ENCODE measurements at regions of chr16 and their contacts with region 1.

Region 1: GRCh38 chr16:68040507-68041288 is 17.6 kb downstream of the DUS2 start:
- DNase-seq: peak; percentile 89
- H3K4me3 ChIP-seq: no peak overlapping the region
- H3K27ac ChIP-seq: peak overlapping the region in 1 of 4 donors; percentile 18
- H3K4me1 ChIP-seq: no peaks in the 10 kb centered on the region
- H3K27me3 ChIP-seq: no peaks in the 10 kb centered on the region
- CTCF ChIP-seq: peak; percentile 83 to 90 (median 90)
- EP300 ChIP-seq: no peak
- POLR2A ChIP-seq: no peak

Region 2: GRCh38 chr16:67968400-67969253 is 72.1 kb before region 1 on chr16 and contains the start of gene SLC12A4:
- in situ Hi-C with region 1: no loop called
- intact Hi-C with region 1: no loop called
- DNase-seq: peak; percentile 85
- H3K4me3 ChIP-seq: peak within 1 kb of the TSS; percentile 52 to 82 (median 76)
- H3K27ac ChIP-seq: peak within 1 kb of the TSS; percentile 90 to 95 (median 94)
- H3K4me1 ChIP-seq: peaks cover 12 to 34% (median 21%) of the 10 kb centered on the region in 4 donors
- H3K27me3 ChIP-seq: peaks cover 22% of the 10 kb centered on the region
- CTCF ChIP-seq: no peak
- EP300 ChIP-seq: no peak
- POLR2A ChIP-seq: peak; percentile 55
- total RNA-seq, gene SLC12A4: 18.1 to 46.4 (median 25.4) TPM

Region 3: DNA sequence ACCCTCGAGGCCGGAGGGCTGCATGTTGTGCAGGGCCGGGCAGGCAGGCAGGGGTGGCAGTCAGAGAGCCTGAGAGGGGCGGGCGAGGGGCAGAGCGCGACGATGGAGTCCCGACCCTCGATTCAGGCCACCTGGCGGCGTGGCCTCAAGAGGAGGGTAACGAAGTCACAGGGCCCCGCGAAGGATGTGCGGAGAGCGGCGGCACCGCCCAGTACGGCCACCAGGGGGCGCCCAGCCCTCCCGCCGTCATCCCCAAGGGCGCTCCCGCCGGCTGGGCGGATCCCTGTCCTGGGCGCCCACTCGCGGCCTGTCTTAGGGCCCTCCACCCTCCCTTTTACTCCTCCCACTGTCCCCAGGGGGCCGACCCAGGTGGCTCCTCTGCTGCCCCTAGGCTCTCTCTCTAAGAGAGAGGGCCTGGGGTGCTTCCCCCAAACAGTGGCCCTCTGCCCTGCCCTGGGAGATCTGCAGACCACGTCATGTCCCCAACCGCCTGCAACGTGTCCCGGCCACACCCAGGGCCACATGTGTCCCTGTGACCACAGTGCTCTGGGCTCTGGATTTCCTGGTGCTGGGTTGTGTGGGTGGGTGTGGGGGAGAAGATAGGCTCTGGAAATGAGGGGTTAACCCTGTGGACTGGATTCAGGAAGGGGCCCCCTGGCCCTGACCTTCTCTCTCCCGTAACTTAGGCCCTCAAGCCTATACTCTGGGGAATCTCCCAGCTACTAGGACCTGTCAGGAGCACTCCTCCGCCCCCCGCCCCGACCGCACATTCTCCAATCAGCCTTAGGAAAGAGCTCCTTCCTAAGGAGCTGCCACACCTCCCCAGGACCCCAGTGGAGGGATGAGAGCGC is 47.3 kb before region 1 on chr16:
- in situ Hi-C with region 1: loop called in 1 of 4 experiments (anchors 10 kb)
- intact Hi-C with region 1: loop called (anchors 1 kb)
- DNase-seq: peak; percentile 86
- H3K4me3 ChIP-seq: peak overlapping the region in 3 of 4 donors; percentile 17 to 43 (median 21)
- H3K27ac ChIP-seq: peak overlapping the region; percentile 55 to 71 (median 62)
- H3K4me1 ChIP-seq: peaks cover 5 to 12% (median 8%) of the 10 kb centered on the region in 4 donors
- H3K27me3 ChIP-seq: no peaks in the 10 kb centered on the region
- CTCF ChIP-seq: peak; percentile 94 to 100 (median 99)
- EP300 ChIP-seq: no peak
- POLR2A ChIP-seq: peak; percentile 16

Region 4: GRCh38 chr16:68093816-68094613 is 53.3 kb after region 1 on chr16:
- in situ Hi-C with region 1: no loop called
- intact Hi-C with region 1: no loop called
- DNase-seq: no peak
- H3K4me3 ChIP-seq: no peak overlapping the region
- H3K27ac ChIP-seq: no peak overlapping the region
- H3K4me1 ChIP-seq: peaks cover 0 to 68% (median 19%) of the 10 kb centered on the region in 4 donors
- H3K27me3 ChIP-seq: no peaks in the 10 kb centered on the region
- CTCF ChIP-seq: peak in 3 of 5 experiments; percentile 11 to 32 (median 31)
- EP300 ChIP-seq: no peak
- POLR2A ChIP-seq: no peak